Thyroid gland (tissue), 4 donors: ENCODE measurements at regions of chr17 and their contacts with region 1.

Region 1: GRCh38 chr17:46212634-46213435 is 19.6 kb upstream of the KANSL1 start:
- DNase-seq: peak; percentile 68 to 70
- H3K4me3 ChIP-seq: no peak overlapping the region
- H3K27ac ChIP-seq: no peak overlapping the region
- H3K4me1 ChIP-seq: no peaks in the 10 kb centered on the region
- H3K27me3 ChIP-seq: no peaks in the 10 kb centered on the region
- CTCF ChIP-seq: peak; percentile 29 to 94 (median 78)
- POLR2A ChIP-seq: no peak

Region 2: DNA sequence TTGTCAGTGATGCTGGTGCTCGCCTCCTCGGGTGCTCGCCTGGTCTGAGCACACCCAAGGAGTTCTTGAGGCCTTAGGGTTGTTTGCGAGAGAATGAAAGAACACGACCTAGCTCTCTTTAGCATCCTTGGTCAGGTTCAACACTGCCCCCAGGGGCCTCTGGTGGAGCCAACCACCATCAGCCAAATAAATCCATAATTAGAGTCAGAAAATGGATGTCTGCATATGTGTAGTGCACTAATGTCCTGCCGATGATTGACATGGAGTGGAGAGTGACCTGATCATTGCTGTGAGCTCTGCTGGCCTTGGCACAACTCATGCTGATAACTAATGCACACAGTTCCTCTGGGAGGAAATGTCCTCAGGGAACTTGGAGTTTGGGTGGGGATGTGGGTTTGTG is 221.9 kb before region 1 on chr17:
- intact Hi-C with region 1: no loop called
- DNase-seq: no peak
- H3K4me3 ChIP-seq: no peak overlapping the region
- H3K27ac ChIP-seq: no peak overlapping the region
- H3K4me1 ChIP-seq: no peaks in the 10 kb centered on the region
- H3K27me3 ChIP-seq: no peaks in the 10 kb centered on the region
- CTCF ChIP-seq: no peak
- POLR2A ChIP-seq: no peak

Region 3: GRCh38 chr17:46002311-46002972 is 210.4 kb before region 1 on chr17:
- intact Hi-C with region 1: loop called (anchors 5 kb)
- DNase-seq: peak; percentile 75 to 78
- H3K4me3 ChIP-seq: no peak overlapping the region
- H3K27ac ChIP-seq: no peak overlapping the region
- H3K4me1 ChIP-seq: peaks cover 9 to 11% of the 10 kb centered on the region in 2 donors
- H3K27me3 ChIP-seq: no peaks in the 10 kb centered on the region
- CTCF ChIP-seq: peak; percentile 87 to 97 (median 94)
- POLR2A ChIP-seq: no peak

Region 4: DNA sequence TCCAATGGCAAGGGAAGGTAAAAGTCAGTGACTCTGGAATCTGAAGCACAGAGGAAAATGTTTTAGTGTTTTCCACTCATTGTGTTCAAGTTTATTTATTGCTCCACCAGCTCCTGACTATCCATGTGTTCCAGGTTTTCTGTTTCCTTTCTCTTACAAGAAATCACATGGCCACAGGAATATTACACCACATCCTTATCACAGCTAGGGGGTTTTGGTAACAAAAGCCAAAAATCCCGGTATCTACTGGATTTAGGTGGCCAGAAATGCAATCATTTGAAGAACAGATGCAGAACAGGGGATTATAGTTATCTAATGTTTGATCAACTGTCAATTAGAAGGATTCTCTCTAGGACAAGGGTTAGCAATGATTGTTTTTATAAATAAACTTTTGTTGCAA is 165.9 kb before region 1 on chr17:
- intact Hi-C with region 1: loop called (anchors 5 kb)
- DNase-seq: no peak
- H3K4me3 ChIP-seq: no peak overlapping the region
- H3K27ac ChIP-seq: peak overlapping the region; percentile 57 to 89 (median 83)
- H3K4me1 ChIP-seq: peaks cover 46 to 50% of the 10 kb centered on the region in 2 donors
- H3K27me3 ChIP-seq: no peaks in the 10 kb centered on the region
- CTCF ChIP-seq: peak in 4 of 6 experiments; percentile 11 to 40 (median 25)
- POLR2A ChIP-seq: no peak

Region 5: DNA sequence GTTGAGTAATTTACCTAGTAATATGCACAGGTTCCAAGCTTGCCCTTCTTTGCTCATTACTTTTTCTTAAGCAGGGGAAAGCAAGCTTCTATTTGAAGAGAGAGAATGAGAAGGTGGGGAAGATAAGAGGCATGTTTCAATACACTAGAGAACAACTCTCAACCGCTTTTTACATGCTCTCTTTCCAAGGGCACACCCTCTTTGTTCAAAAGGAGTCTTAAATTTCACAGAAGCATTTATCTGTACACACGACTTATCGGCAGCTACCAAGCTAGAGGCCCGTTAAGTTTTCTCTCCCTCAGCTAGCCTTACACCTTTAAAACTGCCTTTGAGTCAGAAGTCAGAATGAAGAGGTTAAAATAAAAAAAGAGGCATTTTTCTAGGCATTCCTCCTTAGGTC is 134.2 kb before region 1 on chr17:
- intact Hi-C with region 1: no loop called
- DNase-seq: no peak
- H3K4me3 ChIP-seq: no peak overlapping the region
- H3K27ac ChIP-seq: peak overlapping the region in 2 of 3 donors; percentile 19 to 25
- H3K4me1 ChIP-seq: peaks cover 28 to 68% of the 10 kb centered on the region in 2 donors
- H3K27me3 ChIP-seq: no peaks in the 10 kb centered on the region
- CTCF ChIP-seq: no peak
- POLR2A ChIP-seq: no peak

Region 6: GRCh38 chr17:46266656-46267544 is 54.1 kb after region 1 on chr17:
- intact Hi-C with region 1: no loop called
- DNase-seq: peak; percentile 84 to 86
- H3K4me3 ChIP-seq: peak overlapping the region; percentile 54 to 60 (median 60)
- H3K27ac ChIP-seq: peak overlapping the region; percentile 86 to 95 (median 88)
- H3K4me1 ChIP-seq: peaks cover 0 to 6% of the 10 kb centered on the region in 2 donors
- H3K27me3 ChIP-seq: no peaks in the 10 kb centered on the region
- CTCF ChIP-seq: peak in 1 of 6 experiments; percentile 8
- POLR2A ChIP-seq: peak in 1 of 2 donors; percentile 73